Dorsolateral prefrontal cortex (tissue), 120 donors: ENCODE measurements at regions of chr11 and their contacts with region 1.

Region 1: DNA sequence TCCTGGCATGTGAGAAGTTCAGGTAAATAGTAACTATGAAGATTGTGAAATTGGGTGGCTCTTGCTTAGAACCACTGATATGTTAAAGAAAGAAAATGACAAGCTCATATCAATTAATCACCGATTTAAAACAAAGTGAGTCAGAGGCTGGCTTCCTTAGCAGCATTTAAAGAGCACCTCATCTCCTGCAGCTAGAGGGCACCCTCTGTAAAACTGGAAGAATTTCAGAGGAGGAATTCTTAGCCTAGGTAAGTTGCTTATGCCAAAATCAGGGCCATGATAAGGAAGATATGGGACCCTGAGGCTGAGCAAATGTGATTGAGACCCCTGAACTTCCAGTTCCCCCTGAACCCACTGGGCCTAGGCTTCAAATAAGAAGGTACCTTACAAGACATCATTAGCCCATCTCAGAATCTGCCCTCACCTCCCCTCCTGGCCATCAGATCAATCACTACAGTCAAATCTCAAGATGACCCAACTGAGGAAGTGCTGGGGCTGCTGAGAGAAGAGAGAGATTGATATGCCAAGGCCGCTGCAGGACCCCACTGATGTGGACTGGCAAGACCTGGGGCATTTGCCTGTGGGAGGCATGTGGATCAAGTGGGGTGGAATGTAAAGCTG is 8.6 kb upstream of the CD3E start:
- DNase-seq: peak in 1 of 10 donors; percentile 9
- H3K4me3 ChIP-seq: no peak overlapping the region
- H3K27ac ChIP-seq: no peak overlapping the region
- H3K27me3 ChIP-seq: peaks cover 0 to 5% (median 0%) of the 10 kb centered on the region in 45 donors
- CTCF ChIP-seq: peak in 53 of 56 donors; percentile 16 to 65 (median 41)

Region 2: DNA sequence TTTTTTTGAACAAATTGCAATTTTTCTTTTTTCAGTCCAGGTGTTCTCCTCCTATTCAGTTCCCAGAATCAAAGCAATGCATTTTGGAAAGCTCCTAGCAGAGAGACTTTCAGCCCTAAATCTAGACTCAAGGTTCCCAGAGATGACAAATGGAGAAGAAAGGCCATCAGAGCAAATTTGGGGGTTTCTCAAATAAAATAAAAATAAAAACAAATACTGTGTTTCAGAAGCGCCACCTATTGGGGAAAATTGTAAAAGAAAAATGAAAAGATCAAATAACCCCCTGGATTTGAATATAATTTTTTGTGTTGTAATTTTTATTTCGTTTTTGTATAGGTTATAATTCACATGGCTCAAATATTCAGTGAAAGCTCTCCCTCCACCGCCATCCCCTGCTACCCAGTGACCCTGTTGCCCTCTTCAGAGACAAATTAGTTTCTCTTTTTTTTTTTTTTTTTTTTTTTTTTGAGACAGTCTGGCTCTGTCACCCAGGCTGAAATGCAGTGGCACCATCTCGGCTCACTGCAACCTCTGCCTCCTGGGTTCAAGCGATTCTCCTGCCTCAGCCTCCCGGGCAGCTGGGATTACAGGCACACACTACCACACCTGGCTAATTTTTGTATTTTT is 57.3 kb after region 1 on chr11:
- intact Hi-C with region 1: loop called in 1 of 2 experiments (anchors 5 kb)
- DNase-seq: no peak
- H3K4me3 ChIP-seq: no peak overlapping the region
- H3K27ac ChIP-seq: no peak overlapping the region
- H3K27me3 ChIP-seq: peaks cover 0 to 24% (median 3%) of the 10 kb centered on the region in 45 donors
- CTCF ChIP-seq: peak; percentile 51 to 85 (median 70)